Activated CD4-positive, alpha-beta memory T cell treated with anti-CD3 and anti-CD28 coated beads for 36 hours (primary cell): ENCODE measurements at regions of chr6 and their contacts with region 1.

Region 1: GRCh38 chr6:36678518-36679027 is at the start of gene CDKN1A:
- DNase-seq: peak; percentile 84
- H3K4me3 Mint-ChIP-seq: peak within 1 kb of the TSS; percentile 98
- H3K27ac Mint-ChIP-seq: peak within 1 kb of the TSS; percentile 95
- H3K4me1 Mint-ChIP-seq: peaks cover 48% of the 10 kb centered on the region
- H3K27me3 Mint-ChIP-seq: peaks cover 4% of the 10 kb centered on the region
- total RNA-seq, gene CDKN1A: 64.2 to 66.7 TPM

Region 2: GRCh38 chr6:36290661-36291620 is 387.6 kb before region 1 on chr6:
- CTCF ChIA-PET with region 1: no interaction called
- POLR2A ChIA-PET with region 1: no interaction called
- intact Hi-C with region 1: no loop called
- DNase-seq: no peak
- H3K4me3 Mint-ChIP-seq: no peak overlapping the region
- H3K27ac Mint-ChIP-seq: no peak overlapping the region
- H3K4me1 Mint-ChIP-seq: peaks cover 8% of the 10 kb centered on the region
- H3K27me3 Mint-ChIP-seq: peaks cover 5% of the 10 kb centered on the region

Region 3: DNA sequence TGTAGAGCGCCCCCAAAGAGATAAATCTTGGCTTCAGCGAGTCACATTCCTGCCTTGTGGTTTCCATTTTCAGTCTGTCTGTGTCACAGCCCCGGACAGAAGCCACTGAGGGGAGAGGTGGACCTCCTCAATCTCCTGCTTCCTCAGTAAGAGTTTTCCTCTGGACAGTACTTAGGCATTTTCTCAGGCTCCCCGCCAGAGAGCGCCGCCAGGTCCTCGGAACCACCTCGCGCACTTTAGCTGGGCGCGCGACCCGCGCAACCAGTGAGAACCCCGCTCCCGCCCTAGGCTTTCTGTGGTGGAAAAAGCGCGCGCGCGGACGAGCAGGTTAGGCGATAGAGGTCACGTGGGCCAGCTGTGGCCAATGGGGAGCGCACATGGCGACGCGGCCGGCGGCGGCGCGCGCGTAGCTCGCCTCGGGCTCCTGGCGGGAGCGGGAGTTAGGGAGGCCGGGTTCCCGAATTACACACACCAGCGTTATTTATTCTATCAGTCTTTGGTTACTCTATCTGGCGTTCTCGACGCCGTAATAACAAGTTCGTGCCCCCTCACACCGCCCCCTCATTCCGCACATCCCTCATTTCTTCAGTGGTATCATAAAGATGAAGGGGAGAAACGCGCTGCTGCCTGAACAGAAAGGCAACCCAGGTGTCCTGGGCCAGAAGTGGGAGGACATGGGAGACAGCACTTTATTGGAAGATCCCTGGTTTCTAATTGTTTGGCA is 255.3 kb before region 1 on chr6:
- CTCF ChIA-PET with region 1: interaction called, 3 read pairs
- POLR2A ChIA-PET with region 1: interaction called, 4 read pairs
- intact Hi-C with region 1: loop called (anchors 1 kb)
- DNase-seq: peak; percentile 99
- H3K4me3 Mint-ChIP-seq: peak overlapping the region; percentile 80
- H3K27ac Mint-ChIP-seq: peak overlapping the region; percentile 84
- H3K4me1 Mint-ChIP-seq: peaks cover 17% of the 10 kb centered on the region
- H3K27me3 Mint-ChIP-seq: no peaks in the 10 kb centered on the region

Region 4: GRCh38 chr6:36546920-36547645 is 131.5 kb before region 1 on chr6 and contains the start of gene STK38:
- CTCF ChIA-PET with region 1: no interaction called
- POLR2A ChIA-PET with region 1: no interaction called
- intact Hi-C with region 1: loop called (anchors 5 kb)
- DNase-seq: peak; percentile 97
- H3K4me3 Mint-ChIP-seq: peak within 1 kb of the TSS; percentile 96
- H3K27ac Mint-ChIP-seq: peak within 1 kb of the TSS; percentile 97
- H3K4me1 Mint-ChIP-seq: peaks cover 41% of the 10 kb centered on the region
- H3K27me3 Mint-ChIP-seq: no peaks in the 10 kb centered on the region
- total RNA-seq, gene STK38: 25.8 to 27.5 TPM

Region 5: DNA sequence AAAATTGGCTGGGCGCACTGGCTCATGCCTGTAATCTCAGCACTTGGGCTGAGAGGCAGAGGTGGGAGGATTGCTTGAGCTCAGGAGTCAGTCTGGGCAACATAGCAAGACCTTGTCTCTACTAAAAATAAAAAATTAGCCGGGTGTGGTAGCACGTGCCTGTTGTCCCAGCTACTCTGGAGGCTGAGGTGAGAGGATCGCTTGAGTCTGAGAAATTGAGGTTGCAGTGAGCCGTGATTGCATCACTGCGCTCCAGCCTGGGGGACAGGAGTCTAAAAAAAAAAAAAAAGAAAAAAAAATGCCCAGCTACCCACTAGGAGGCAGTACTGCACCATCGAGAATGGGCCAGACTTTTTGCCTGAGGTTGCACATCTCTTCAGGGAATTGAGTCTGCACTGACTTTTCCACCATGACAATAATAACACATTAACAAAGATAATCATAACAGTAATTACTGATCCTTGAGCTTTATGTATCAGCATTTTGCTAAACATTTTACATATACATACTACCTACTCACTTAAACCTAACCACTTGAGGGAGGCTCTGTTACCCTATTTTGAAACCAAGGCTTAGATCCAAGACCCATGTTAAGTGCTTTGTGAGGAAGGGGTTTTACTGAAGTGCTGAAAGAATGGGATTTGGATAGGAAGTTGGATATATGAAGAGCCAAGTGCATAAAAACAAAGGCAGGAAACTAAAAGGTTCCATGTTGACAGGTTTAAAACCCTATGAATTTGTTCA is 63.4 kb before region 1 on chr6:
- CTCF ChIA-PET with region 1: interaction called, 30 read pairs
- POLR2A ChIA-PET with region 1: interaction called, 9 read pairs
- intact Hi-C with region 1: no loop called
- DNase-seq: peak; percentile 70
- H3K4me3 Mint-ChIP-seq: no peak overlapping the region
- H3K27ac Mint-ChIP-seq: peak overlapping the region; percentile 66
- H3K4me1 Mint-ChIP-seq: peaks cover 18% of the 10 kb centered on the region
- H3K27me3 Mint-ChIP-seq: no peaks in the 10 kb centered on the region

Region 6: GRCh38 chr6:36691612-36692011 is 13.0 kb after region 1 on chr6:
- CTCF ChIA-PET with region 1: interaction called, 10 read pairs
- POLR2A ChIA-PET with region 1: interaction called, 8 read pairs
- intact Hi-C with region 1: loop called (anchors 1 kb)
- DNase-seq: peak; percentile 37
- H3K4me3 Mint-ChIP-seq: no peak overlapping the region
- H3K27ac Mint-ChIP-seq: peak overlapping the region; percentile 21
- H3K4me1 Mint-ChIP-seq: peaks cover 52% of the 10 kb centered on the region
- H3K27me3 Mint-ChIP-seq: no peaks in the 10 kb centered on the region

Region 7: GRCh38 chr6:36752886-36753506 is 74.4 kb after region 1 on chr6:
- CTCF ChIA-PET with region 1: interaction called, 59 read pairs
- POLR2A ChIA-PET with region 1: interaction called, 13 read pairs
- intact Hi-C with region 1: loop called (anchors 1 kb)
- DNase-seq: no peak
- H3K4me3 Mint-ChIP-seq: no peak overlapping the region
- H3K27ac Mint-ChIP-seq: peak overlapping the region; percentile 21
- H3K4me1 Mint-ChIP-seq: peaks cover 59% of the 10 kb centered on the region
- H3K27me3 Mint-ChIP-seq: no peaks in the 10 kb centered on the region